A549 (cell line): ENCODE measurements at regions of chr1 and their contacts with region 1.

Region 1: DNA sequence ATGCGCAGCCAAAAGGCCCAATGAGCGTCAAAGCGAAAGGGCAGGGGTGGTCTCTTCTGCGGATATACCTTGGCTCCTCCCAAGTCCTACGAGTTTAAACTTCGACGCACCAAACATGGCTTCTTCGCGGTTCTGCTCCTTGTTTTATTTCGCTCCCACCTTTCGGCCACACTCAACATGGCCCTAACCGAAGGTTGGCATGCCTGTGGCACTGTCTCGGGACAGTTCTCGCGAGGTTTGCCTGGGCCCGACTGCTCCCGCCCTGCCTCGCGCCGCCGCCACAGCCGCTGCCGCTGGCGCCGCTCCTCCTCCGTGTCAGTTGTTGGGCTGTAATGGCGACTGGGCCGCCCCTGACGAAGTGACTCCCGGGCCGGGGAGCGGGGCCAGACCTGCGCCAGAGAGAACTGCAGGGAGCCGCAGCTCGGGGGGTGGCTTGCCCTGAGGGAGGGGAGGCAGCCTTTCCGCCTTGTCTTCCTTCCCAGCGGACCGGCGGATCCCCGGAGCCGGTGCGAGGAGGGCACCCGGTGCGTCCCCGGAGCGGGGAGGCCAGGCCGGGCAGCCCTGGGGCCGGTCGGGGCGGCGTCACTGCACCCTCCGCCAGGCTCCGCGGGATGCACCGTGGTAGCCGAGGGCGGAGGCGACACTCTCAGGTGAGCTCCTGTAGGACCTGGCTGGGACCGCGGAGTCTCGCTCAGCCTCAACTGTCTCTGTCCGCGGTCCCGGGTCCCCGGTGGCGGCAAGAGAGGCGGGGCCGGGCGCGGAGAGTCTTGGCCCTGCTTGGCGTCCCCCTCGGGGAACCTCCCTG is at the start of gene CEP350:
- DNase-seq: peak; percentile 77 to 99
- ATAC-seq: peak; percentile 89 to 97
- H3K4me3 ChIP-seq: peak within 1 kb of the TSS; percentile 68
- H3K27ac ChIP-seq: peak within 1 kb of the TSS; percentile 79 to 97
- H3K4me1 ChIP-seq: peaks cover 17% of the 10 kb centered on the region
- CTCF ChIP-seq: no peak
- EP300 ChIP-seq: no peak
- POLR2A ChIP-seq: peak; percentile 86
- RAD21 ChIP-seq: no peak; a peak in 1 of 5 replicates
- polyA plus RNA-seq, gene CEP350: 21.4 and 22.6 TPM in 2 replicates

Region 2: GRCh38 chr1:179506199-179506598 is 448.5 kb before region 1 on chr1:
- CTCF ChIA-PET with region 1: no interaction called
- POLR2A ChIA-PET with region 1: no interaction called
- DNase-seq: no peak
- ATAC-seq: no peak
- H3K4me3 ChIP-seq: no peak overlapping the region
- H3K27ac ChIP-seq: no peak overlapping the region
- H3K4me1 ChIP-seq: no peaks in the 10 kb centered on the region
- CTCF ChIP-seq: no peak
- EP300 ChIP-seq: no peak
- POLR2A ChIP-seq: no peak
- RAD21 ChIP-seq: no peak

Region 3: GRCh38 chr1:179781962-179782361 is 172.7 kb before region 1 on chr1:
- CTCF ChIA-PET with region 1: no interaction called
- POLR2A ChIA-PET with region 1: no interaction called
- DNase-seq: no peak
- ATAC-seq: no peak
- H3K4me3 ChIP-seq: no peak overlapping the region
- H3K27ac ChIP-seq: no peak overlapping the region
- H3K4me1 ChIP-seq: no peaks in the 10 kb centered on the region
- CTCF ChIP-seq: no peak
- EP300 ChIP-seq: no peak
- POLR2A ChIP-seq: no peak
- RAD21 ChIP-seq: no peak

Region 4: DNA sequence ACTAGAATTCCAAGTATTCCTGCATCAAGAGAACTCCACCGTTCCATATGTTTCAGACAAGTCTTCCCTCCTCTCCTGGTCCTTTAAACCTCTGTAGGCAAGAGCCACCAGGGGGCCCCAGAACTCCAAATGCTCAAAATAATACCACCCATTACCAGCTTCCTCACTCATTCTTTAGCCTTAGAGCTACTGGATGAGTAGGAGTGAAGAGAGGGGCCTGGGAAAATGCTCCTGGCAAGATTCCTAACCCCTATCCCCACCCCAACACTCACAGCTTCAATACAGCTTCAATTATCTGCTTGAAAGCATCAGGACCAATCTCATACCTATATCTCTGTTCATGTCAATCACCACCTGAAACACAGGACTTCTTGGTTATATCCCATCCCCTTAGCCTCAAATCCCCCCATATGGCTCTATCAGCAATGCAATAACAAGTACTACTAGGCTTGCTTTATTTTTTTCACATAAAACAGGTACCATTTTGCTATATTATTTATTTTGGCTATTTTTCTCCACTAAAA is 86.8 kb before region 1 on chr1:
- CTCF ChIA-PET with region 1: interaction called, 3 read pairs
- POLR2A ChIA-PET with region 1: interaction called, 10 read pairs
- DNase-seq: peak; percentile 54 to 64
- ATAC-seq: peak; percentile 96 to 98
- H3K4me3 ChIP-seq: no peak overlapping the region
- H3K27ac ChIP-seq: no peak overlapping the region
- H3K4me1 ChIP-seq: peaks cover under 1% of the 10 kb centered on the region; the same call in 1 of the 3 replicates
- CTCF ChIP-seq: peak; percentile 81
- EP300 ChIP-seq: no peak
- POLR2A ChIP-seq: no peak
- RAD21 ChIP-seq: peak; percentile 75

Region 5: GRCh38 chr1:179984942-179985341 is 30.2 kb after region 1 on chr1:
- CTCF ChIA-PET with region 1: no interaction called
- POLR2A ChIA-PET with region 1: no interaction called
- DNase-seq: no peak
- ATAC-seq: no peak
- H3K4me3 ChIP-seq: no peak overlapping the region
- H3K27ac ChIP-seq: no peak overlapping the region
- H3K4me1 ChIP-seq: no peaks in the 10 kb centered on the region
- CTCF ChIP-seq: no peak
- EP300 ChIP-seq: no peak
- POLR2A ChIP-seq: no peak
- RAD21 ChIP-seq: no peak

Region 6: DNA sequence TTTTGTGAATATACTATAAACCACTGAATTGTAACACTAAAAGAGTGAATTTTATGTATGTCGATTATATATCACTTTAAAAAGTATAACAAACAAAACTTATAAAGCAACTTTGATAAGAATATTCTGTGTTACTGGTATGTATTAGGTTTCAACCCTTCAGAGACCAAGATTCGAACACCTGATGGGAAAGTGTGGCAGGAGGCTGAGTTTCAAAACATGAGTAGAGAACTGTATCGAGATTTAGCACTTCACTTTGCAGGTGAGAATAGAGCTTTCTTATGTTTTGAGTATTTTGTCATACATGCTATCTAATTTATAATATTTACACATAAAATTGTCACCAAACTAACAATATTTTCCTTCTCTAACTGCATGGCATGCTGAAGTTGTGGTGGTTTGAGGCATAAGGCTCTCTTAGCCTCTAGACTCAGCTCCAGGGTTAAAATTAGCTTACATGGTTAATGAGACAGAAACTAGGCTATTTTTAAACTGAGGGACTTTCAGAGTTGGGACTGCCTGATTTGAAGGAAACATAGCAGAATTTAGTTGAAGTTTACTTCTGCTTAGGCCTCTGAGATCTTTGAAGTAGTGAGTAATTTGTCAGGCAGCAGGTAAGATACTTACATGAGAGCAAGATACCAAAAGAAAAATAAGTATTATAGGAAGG is 48.5 kb after region 1 on chr1:
- CTCF ChIA-PET with region 1: no interaction called
- POLR2A ChIA-PET with region 1: interaction called, 10 read pairs
- DNase-seq: no peak
- ATAC-seq: no peak
- H3K4me3 ChIP-seq: no peak overlapping the region
- H3K27ac ChIP-seq: no peak overlapping the region
- H3K4me1 ChIP-seq: no peaks in the 10 kb centered on the region
- CTCF ChIP-seq: no peak
- EP300 ChIP-seq: no peak
- POLR2A ChIP-seq: no peak
- RAD21 ChIP-seq: no peak